ENCODE measurements at regions of chr11 and their contacts with region 1.

Region 1: GRCh38 chr11:75351791-75352587 is 528 bp upstream of the ARRB1 start:
- DNase-seq: peak; percentile 82 to 87 (median 84)
- H3K4me3 ChIP-seq: peak overlapping the region; percentile 76 to 98 (median 79)
- H3K4me3 Mint-ChIP-seq: peak overlapping the region; percentile 84 to 92
- H3K27ac ChIP-seq: peak overlapping the region; percentile 77 to 94
- H3K27ac Mint-ChIP-seq: peak overlapping the region; percentile 90 to 97 (median 94)
- H3K4me1 ChIP-seq: peaks cover 45 to 62% of the 10 kb centered on the region in 2 donors
- H3K4me1 Mint-ChIP-seq: peaks cover 67% of the 10 kb centered on the region
- H3K27me3 ChIP-seq: no peaks in the 10 kb centered on the region
- H3K27me3 Mint-ChIP-seq: peaks cover under 1 to 3% (median 2%) of the 10 kb centered on the region in 3 donors
- CTCF ChIP-seq: peak; percentile 30

Region 2: DNA sequence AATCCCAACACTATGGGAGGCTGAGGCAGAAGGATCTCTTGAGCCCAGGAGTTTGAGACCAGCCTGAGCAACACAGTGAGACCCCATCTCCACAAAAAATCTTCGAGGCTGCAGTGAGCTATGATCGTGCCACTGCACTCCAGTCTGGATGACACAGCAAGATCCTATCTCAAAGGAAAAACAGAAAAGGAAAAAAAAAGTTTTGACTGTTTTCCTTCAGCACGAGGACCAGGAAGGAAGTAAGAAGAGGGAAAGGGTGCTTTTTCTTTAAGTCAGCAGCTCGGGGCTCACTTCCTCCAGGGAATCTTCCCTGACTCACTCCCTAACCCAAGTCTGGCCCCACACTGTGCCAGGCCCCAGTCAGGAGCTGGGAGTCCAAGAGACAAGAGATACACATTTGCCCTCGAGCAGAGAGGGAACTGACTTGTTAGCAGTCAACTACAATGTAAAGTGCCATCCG is 14.8 kb before region 1 on chr11:
- intact Hi-C with region 1: loop called in 1 of 2 experiments (anchors 2 kb)
- DNase-seq: peak; percentile 74 to 96 (median 84)
- H3K4me3 ChIP-seq: peak overlapping the region in 1 of 3 experiments; percentile 56
- H3K4me3 Mint-ChIP-seq: peak overlapping the region; percentile 45 to 74
- H3K27ac ChIP-seq: peak overlapping the region; percentile 52 to 86
- H3K27ac Mint-ChIP-seq: peak overlapping the region; percentile 84 to 94 (median 89)
- H3K4me1 ChIP-seq: peaks cover 92 to 95% of the 10 kb centered on the region in 2 donors
- H3K4me1 Mint-ChIP-seq: peaks cover 96% of the 10 kb centered on the region
- H3K27me3 ChIP-seq: no peaks in the 10 kb centered on the region
- H3K27me3 Mint-ChIP-seq: peaks cover 0 to 2% (median 0%) of the 10 kb centered on the region in 3 donors
- CTCF ChIP-seq: no peak